Activated naive CD4-positive, alpha-beta T cell treated with anti-CD3 and anti-CD28 coated beads for 36 hours (primary cell): ENCODE measurements at regions of chr4 and their contacts with region 1.

Region 1: DNA sequence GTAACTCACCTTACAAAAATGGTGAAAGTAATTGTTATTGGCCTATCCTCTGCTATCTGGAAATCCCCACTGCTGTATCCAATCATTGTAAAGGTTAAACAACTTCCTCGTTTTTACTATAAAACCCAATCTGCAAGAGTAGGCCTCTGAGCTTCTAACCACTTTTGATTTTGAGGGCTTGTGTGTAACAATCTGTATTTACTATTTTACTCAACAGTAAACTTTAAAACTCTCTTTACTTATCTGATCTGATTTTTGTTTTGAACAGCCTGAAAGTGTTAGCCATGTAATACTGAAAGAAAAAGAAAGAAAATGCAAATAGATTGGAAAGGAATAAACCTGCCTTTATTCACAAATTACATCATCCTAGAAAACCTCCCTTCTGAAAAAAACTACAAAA is 63.1 kb downstream of the SLC10A7 start:
- DNase-seq: peak; percentile 15
- H3K4me3 Mint-ChIP-seq: peak overlapping the region; percentile 63
- H3K27ac Mint-ChIP-seq: peak overlapping the region; percentile 91
- H3K4me1 Mint-ChIP-seq: peaks cover 32% of the 10 kb centered on the region
- H3K27me3 Mint-ChIP-seq: no peaks in the 10 kb centered on the region

Region 2: DNA sequence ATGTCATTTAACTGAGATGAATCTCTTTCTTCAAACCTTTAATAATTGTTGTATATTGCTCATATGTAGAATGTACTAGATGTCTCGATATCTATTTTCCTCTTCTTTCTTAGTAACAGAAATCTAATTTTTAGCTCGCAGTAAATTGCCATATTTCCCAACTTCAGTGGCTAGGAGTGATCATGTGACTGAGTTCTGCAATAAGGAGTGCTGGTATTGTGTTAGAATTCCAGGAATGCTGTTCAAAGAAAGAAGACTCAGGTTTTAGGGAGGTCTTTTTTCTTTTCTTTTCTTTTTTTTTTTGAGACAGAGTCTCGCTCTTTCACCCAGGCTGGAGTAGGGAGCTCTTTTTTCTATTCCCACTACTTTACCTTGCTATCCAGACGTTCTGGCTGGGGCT is 18.6 kb before region 1 on chr4:
- CTCF ChIA-PET with region 1: no interaction called
- intact Hi-C with region 1: loop called (anchors 1 kb)
- DNase-seq: no peak
- H3K4me3 Mint-ChIP-seq: no peak overlapping the region
- H3K27ac Mint-ChIP-seq: no peak overlapping the region
- H3K4me1 Mint-ChIP-seq: peaks cover 9% of the 10 kb centered on the region
- H3K27me3 Mint-ChIP-seq: no peaks in the 10 kb centered on the region

Region 3: GRCh38 chr4:146545102-146545501 is 86.5 kb after region 1 on chr4:
- CTCF ChIA-PET with region 1: no interaction called
- intact Hi-C with region 1: no loop called
- DNase-seq: no peak
- H3K4me3 Mint-ChIP-seq: no peak overlapping the region
- H3K27ac Mint-ChIP-seq: no peak overlapping the region
- H3K4me1 Mint-ChIP-seq: no peaks in the 10 kb centered on the region
- H3K27me3 Mint-ChIP-seq: peaks cover 33% of the 10 kb centered on the region

Region 4: GRCh38 chr4:146945556-146946374 is 487.2 kb after region 1 on chr4 and contains the start of gene TTC29:
- CTCF ChIA-PET with region 1: no interaction called
- intact Hi-C with region 1: loop called (anchors 1 kb)
- DNase-seq: peak; percentile 92
- H3K4me3 Mint-ChIP-seq: peak within 1 kb of the TSS; percentile 71
- H3K27ac Mint-ChIP-seq: no peak within 1 kb of the TSS
- H3K4me1 Mint-ChIP-seq: peaks cover 26% of the 10 kb centered on the region
- H3K27me3 Mint-ChIP-seq: peaks cover 11% of the 10 kb centered on the region
- total RNA-seq, gene TTC29: not detected

Region 5: GRCh38 chr4:146957237-146957636 is 498.6 kb after region 1 on chr4:
- CTCF ChIA-PET with region 1: no interaction called
- intact Hi-C with region 1: no loop called
- DNase-seq: no peak
- H3K4me3 Mint-ChIP-seq: no peak overlapping the region
- H3K27ac Mint-ChIP-seq: no peak overlapping the region
- H3K4me1 Mint-ChIP-seq: no peaks in the 10 kb centered on the region
- H3K27me3 Mint-ChIP-seq: peaks cover 21% of the 10 kb centered on the region

Region 6: DNA sequence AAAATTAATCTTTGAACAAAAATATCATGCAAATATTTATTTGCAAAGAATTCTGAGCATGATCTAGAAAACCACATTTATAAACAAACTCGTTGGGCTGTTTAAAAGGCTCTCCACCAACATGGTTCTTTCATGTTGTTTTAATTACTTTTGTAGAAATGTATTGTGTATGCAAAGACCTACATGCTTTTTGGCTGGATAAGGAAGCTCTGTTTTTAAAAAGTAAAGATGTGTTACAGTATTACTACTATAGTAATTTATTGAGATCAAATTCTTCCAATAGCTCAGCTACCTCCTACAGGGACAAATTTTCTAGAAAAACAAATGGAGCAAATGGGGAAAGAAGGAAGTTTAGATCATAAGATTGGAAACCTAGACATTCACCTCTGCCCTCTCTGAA is 664.6 kb after region 1 on chr4:
- CTCF ChIA-PET with region 1: no interaction called
- intact Hi-C with region 1: no loop called
- DNase-seq: no peak
- H3K4me3 Mint-ChIP-seq: no peak overlapping the region
- H3K27ac Mint-ChIP-seq: no peak overlapping the region
- H3K4me1 Mint-ChIP-seq: no peaks in the 10 kb centered on the region
- H3K27me3 Mint-ChIP-seq: peaks cover 7% of the 10 kb centered on the region